WTC11 (cell line): ENCODE measurements at regions of chr2 and their contacts with region 1.

Region 1: DNA sequence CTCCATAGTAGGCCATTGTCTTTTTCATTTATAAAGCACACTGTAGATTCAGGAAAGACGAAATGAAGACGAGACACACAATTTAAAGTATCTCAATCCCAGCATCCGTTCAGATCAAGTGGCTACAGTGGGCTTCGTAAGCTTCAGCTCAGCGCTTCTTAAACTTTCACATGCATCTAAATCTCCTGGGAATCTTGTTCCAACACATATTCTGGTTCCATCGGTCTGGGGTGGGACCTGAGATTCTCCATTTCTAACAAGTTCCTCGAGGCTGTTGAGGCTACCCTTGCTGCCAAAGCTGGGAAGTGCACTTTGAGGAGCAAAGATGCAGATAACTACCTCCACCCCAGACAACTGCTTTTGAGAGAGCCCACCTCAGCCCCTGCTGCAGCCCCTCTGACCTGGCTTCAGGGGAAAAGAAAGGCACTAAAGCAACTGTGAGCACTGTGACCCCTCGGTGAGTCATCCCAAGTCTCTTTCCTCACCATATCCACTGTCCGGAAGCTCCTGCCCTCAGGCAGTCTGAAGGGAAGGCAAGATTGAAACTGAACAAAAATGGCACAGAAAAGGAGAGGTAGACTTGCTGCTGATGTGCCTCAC is 201.1 kb upstream of the FBXO11 start:
- DNase-seq: no peak
- ATAC-seq: no peak
- H3K4me3 Mint-ChIP-seq: 0 out of 2 replicates have a peak overlapping the region, but pooled peaks have one; percentile 4
- H3K27ac Mint-ChIP-seq: no peak overlapping the region; the same call in 1 of the 2 replicates
- H3K4me1 Mint-ChIP-seq: peaks cover 31% of the 10 kb centered on the region
- H3K27me3 Mint-ChIP-seq: no peaks in the 10 kb centered on the region
- CTCF ChIP-seq: no peak

Region 2: DNA sequence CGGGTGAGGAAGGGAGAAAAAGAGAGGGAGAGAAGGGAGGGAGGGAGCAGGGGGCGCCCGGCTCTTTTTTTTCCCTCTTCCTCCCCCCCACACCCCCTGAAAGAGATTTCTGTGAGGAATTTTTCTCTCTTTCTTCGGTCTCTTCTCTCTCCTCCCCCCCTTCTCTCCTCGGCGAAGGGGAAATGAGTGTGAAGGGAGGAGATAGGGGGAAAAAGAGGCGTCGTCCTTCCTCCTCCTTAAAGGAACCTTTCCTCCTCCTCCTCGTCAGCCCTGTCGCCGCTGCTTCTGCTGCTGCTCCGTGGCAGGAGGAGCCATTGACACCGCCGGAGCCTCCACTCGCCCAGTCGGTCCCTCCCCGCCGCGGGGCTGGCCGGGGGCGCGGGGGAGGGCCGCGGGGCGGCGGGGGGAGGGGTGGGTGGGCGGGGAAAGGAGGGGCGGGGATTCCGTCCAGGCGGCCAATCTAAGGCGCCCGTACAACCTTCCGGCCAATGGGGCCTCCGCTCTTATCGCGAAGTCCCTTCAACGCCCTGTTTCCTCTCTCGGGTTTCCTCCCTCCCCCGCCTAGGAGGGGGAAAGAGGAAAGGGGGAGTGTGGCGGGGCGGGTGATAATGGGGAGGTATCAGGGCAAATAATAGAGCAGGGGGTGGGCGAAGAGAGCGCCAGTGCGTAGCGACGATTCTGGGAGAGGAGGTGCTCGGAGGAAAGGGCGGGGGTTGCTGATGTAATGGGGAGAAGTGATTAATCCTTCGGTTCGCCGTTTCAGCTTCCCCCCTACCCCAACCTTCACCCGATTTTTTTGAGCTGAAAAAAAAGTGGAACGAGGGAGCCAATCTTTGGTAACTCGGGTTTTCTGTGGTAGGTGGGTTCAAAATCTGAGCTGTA is 201.0 kb before region 1 on chr2 and contains the start of gene FBXO11:
- CTCF ChIA-PET with region 1: interaction called, 24 read pairs
- POLR2A ChIA-PET with region 1: no interaction called
- DNase-seq: peak; percentile 94
- ATAC-seq: peak; percentile 92
- H3K4me3 Mint-ChIP-seq: peak within 1 kb of the TSS; percentile 91
- H3K27ac Mint-ChIP-seq: peak within 1 kb of the TSS; percentile 99
- H3K4me1 Mint-ChIP-seq: peaks cover 30% of the 10 kb centered on the region
- H3K27me3 Mint-ChIP-seq: no peaks in the 10 kb centered on the region; the same call in 1 of the 2 replicates
- CTCF ChIP-seq: peak; percentile 39; the same call in 1 of the 2 replicates
- total RNA-seq, gene FBXO11: 43.8 to 48.2 TPM (median 45.6 TPM) in 3 replicates